Naive thymus-derived CD4-positive, alpha-beta T cell (primary cell): ENCODE measurements at regions of chr14 and their contacts with region 1.

Region 1: GRCh38 chr14:74612350-74613021 is 449 bp upstream of the LTBP2 start:
- DNase-seq: peak; percentile 70 to 97 (median 87)
- ATAC-seq: peak; percentile 95
- H3K4me3 ChIP-seq: peak overlapping the region; percentile 72
- H3K4me3 Mint-ChIP-seq: peak overlapping the region; percentile 60 to 84 (median 78)
- H3K27ac ChIP-seq: peak overlapping the region; percentile 17
- H3K27ac Mint-ChIP-seq: peak overlapping the region in 1 of 9 donors; percentile 46
- H3K4me1 ChIP-seq: peaks cover 5 to 10% of the 10 kb centered on the region in 2 donors
- H3K4me1 Mint-ChIP-seq: peaks cover 23 to 46% (median 39%) of the 10 kb centered on the region in 7 donors
- H3K27me3 ChIP-seq: no peaks in the 10 kb centered on the region
- H3K27me3 Mint-ChIP-seq: peaks cover 0 to 55% (median 6%) of the 10 kb centered on the region in 5 donors

Region 2: DNA sequence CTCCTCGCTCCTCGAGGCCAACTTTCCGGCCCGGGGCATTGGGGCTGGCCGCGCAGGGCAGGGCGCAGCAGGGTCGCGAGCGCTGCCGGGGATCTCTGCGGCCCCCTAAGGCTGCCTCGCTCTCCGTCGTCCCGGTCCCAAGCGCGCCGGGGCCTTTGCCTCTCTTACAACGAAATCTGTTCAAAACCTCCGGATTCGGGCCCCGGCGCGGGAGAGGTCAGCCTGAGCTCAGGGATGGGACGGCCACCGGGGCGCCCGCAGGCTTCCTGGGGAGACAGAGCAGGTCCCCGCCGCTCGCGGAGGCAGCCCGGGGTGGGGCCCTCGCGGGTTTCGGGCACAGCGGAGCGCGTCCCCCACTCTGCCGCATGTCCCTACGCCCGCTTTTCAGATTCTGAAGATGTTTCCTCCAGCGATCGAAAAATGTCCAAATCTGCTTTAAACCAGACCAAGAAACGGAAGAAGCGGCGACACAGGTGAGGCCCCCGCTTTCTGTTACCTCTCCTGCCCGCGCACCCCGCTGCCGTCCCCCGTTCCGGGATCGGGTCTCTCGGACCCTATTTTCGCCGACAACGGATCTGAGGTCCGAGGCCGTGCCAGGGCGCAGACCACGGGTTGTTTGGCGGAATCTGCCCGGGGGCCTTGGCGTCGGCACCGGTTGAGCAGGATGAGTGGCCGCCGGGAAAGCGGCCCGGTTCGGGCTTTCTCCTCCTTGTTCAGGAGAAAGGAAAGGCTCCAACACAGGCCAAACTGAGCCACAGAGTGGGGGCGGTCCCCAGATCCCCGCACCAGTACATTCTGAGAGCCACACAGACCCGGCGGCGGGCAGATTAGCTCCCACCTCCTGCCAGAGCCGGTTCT is 371.5 kb before region 1 on chr14:
- CTCF ChIA-PET with region 1: no interaction called
- POLR2A ChIA-PET with region 1: no interaction called
- intact Hi-C with region 1: no loop called
- DNase-seq: peak in 2 of 9 donors; percentile 5
- ATAC-seq: peak; percentile 32
- H3K4me3 ChIP-seq: peak overlapping the region; percentile 24
- H3K4me3 Mint-ChIP-seq: peak overlapping the region; percentile 33 to 81 (median 72)
- H3K27ac ChIP-seq: no peak overlapping the region
- H3K27ac Mint-ChIP-seq: no peak overlapping the region
- H3K4me1 ChIP-seq: peaks cover 3 to 18% of the 10 kb centered on the region in 2 donors
- H3K4me1 Mint-ChIP-seq: peaks cover 12 to 27% (median 21%) of the 10 kb centered on the region in 7 donors
- H3K27me3 ChIP-seq: peaks cover 11 to 28% of the 10 kb centered on the region in 2 donors
- H3K27me3 Mint-ChIP-seq: peaks cover 74 to 88% (median 85%) of the 10 kb centered on the region in 5 donors

Region 3: GRCh38 chr14:74663884-74664283 is 51.4 kb after region 1 on chr14:
- CTCF ChIA-PET with region 1: interaction called, 4 read pairs
- POLR2A ChIA-PET with region 1: no interaction called
- intact Hi-C with region 1: loop called in 1 of 2 experiments (anchors 5 kb)
- DNase-seq: no peak
- ATAC-seq: no peak
- H3K4me3 ChIP-seq: no peak overlapping the region
- H3K4me3 Mint-ChIP-seq: no peak overlapping the region
- H3K27ac ChIP-seq: no peak overlapping the region
- H3K27ac Mint-ChIP-seq: peak overlapping the region in 2 of 9 donors; percentile 2 to 28
- H3K4me1 ChIP-seq: no peaks in the 10 kb centered on the region
- H3K4me1 Mint-ChIP-seq: peaks cover 0 to 5% (median 0%) of the 10 kb centered on the region in 7 donors
- H3K27me3 ChIP-seq: no peaks in the 10 kb centered on the region
- H3K27me3 Mint-ChIP-seq: no peaks in the 10 kb centered on the region

Region 4: DNA sequence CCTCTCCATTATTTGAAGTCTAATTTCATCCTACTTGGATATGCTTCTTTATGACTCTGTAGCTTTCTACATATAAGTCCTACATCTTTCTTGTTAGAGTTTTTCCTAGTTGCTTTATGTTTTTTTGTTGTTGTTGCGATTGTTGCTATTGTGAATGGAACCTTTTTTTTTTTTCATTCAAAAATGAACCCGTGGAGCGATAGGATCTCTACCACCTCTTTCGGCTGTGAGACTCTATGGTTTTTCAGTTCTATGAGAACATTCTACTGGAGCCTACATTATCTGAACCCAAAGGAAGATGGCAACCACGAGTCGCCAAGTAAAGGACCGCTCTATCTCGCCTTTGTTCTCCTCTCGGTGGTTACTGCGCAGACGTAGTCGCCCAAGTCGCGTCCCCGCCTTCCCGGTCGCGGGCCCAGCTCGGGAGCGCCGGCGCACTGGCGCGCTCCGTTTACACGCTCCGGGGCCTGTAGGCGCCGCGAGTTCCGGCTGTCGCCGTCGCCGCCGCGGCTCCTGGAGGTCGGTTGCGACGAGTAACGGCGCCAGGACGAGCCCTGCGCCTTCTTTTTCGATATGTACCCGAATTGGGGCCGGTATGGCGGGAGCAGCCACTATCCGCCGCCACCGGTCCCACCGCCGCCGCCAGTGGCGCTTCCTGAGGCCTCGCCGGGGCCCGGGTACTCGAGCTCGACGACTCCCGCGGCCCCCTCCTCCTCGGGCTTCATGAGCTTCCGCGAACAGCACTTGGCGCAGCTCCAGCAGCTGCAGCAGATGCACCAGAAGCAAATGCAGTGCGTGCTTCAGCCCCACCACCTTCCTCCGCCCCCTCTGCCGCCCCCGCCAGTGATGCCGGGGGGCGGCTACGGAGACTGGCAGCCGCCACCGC is 150.7 kb after region 1 on chr14 and contains the start of gene YLPM1:
- CTCF ChIA-PET with region 1: interaction called, 14 read pairs
- POLR2A ChIA-PET with region 1: interaction called, 12 read pairs
- intact Hi-C with region 1: loop called (anchors 1 kb)
- DNase-seq: peak; percentile 79 to 97 (median 95)
- ATAC-seq: peak; percentile 98
- H3K4me3 ChIP-seq: peak within 1 kb of the TSS; percentile 58
- H3K4me3 Mint-ChIP-seq: peak within 1 kb of the TSS; percentile 86 to 99 (median 95)
- H3K27ac ChIP-seq: peak within 1 kb of the TSS; percentile 93
- H3K27ac Mint-ChIP-seq: peak within 1 kb of the TSS; percentile 87 to 97 (median 95)
- H3K4me1 ChIP-seq: peaks cover 31 to 38% of the 10 kb centered on the region in 2 donors
- H3K4me1 Mint-ChIP-seq: peaks cover 43 to 56% (median 49%) of the 10 kb centered on the region in 7 donors
- H3K27me3 ChIP-seq: no peaks in the 10 kb centered on the region
- H3K27me3 Mint-ChIP-seq: peaks cover 0 to 2% (median 0%) of the 10 kb centered on the region in 5 donors
- total RNA-seq, gene YLPM1: 84.7 to 119 (median 109) TPM

Region 5: DNA sequence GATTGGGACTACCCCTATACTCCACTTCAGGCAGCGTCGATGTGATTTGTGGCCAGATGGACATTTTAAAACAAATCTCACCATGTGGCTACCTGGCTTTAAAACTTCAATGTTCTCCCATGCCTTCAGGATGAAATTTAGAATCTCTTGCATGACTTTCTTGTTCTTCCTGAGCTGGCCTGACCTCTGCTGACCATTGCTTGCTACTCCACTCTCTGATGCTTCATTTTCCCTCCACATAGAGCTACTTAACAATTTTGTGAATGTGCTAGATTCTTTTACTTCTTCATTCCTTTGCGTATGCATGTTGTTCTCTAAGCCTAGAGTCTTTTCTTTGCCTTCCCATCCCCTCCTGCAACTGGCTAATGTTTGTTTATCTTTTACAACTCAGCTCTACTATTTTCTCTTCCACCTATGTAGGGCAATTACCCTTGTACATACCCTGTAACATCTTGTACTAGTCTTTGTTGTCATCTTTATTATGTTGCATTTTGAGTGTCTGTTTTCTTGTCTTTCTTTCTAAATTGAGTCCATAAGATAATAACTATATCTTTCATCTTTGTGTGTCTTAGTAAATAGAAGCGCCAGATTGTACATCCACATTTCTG is 191.8 kb after region 1 on chr14:
- CTCF ChIA-PET with region 1: interaction called, 12 read pairs
- POLR2A ChIA-PET with region 1: no interaction called
- intact Hi-C with region 1: loop called (anchors 1 kb)
- DNase-seq: peak in 5 of 9 donors; percentile 8 to 41 (median 28)
- ATAC-seq: no peak
- H3K4me3 ChIP-seq: no peak overlapping the region
- H3K4me3 Mint-ChIP-seq: no peak overlapping the region
- H3K27ac ChIP-seq: no peak overlapping the region
- H3K27ac Mint-ChIP-seq: peak overlapping the region in 2 of 9 donors; percentile 6 to 29
- H3K4me1 ChIP-seq: no peaks in the 10 kb centered on the region
- H3K4me1 Mint-ChIP-seq: peaks cover 2 to 25% (median 14%) of the 10 kb centered on the region in 7 donors
- H3K27me3 ChIP-seq: no peaks in the 10 kb centered on the region
- H3K27me3 Mint-ChIP-seq: no peaks in the 10 kb centered on the region

Region 6: GRCh38 chr14:75088574-75089373 is 476.3 kb after region 1 on chr14:
- CTCF ChIA-PET with region 1: interaction called, 6 read pairs
- POLR2A ChIA-PET with region 1: no interaction called
- intact Hi-C with region 1: loop called (anchors 1 to 2 kb)
- DNase-seq: peak in 7 of 9 donors; percentile 27 to 55 (median 47)
- ATAC-seq: peak; percentile 67
- H3K4me3 ChIP-seq: no peak overlapping the region
- H3K4me3 Mint-ChIP-seq: no peak overlapping the region
- H3K27ac ChIP-seq: no peak overlapping the region
- H3K27ac Mint-ChIP-seq: peak overlapping the region in 1 of 9 donors; percentile 40
- H3K4me1 ChIP-seq: no peaks in the 10 kb centered on the region
- H3K4me1 Mint-ChIP-seq: no peaks in the 10 kb centered on the region
- H3K27me3 ChIP-seq: no peaks in the 10 kb centered on the region
- H3K27me3 Mint-ChIP-seq: no peaks in the 10 kb centered on the region

Region 7: DNA sequence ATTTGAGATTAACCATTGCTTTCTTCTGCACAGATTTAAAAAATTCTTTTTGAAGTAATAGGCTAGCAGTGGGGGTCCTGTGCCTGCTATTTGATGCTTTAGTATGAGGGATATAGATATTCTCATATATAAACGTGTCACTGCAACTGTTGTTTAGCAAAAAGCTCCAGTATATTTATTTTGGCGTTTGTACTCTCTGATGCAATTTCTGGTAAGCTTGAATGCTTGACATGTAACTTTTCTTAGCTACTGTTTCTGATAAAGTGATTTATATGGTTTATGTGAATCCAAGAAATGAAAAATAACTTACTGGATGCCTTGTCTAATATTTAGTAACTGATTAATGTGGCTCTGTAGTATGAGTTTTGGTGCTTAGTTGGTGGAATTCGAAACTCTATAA is 1125.7 kb after region 1 on chr14:
- CTCF ChIA-PET with region 1: no interaction called
- POLR2A ChIA-PET with region 1: no interaction called
- intact Hi-C with region 1: no loop called
- DNase-seq: no peak
- ATAC-seq: no peak
- H3K4me3 ChIP-seq: no peak overlapping the region
- H3K4me3 Mint-ChIP-seq: no peak overlapping the region
- H3K27ac ChIP-seq: no peak overlapping the region
- H3K27ac Mint-ChIP-seq: no peak overlapping the region
- H3K4me1 ChIP-seq: no peaks in the 10 kb centered on the region
- H3K4me1 Mint-ChIP-seq: no peaks in the 10 kb centered on the region
- H3K27me3 ChIP-seq: no peaks in the 10 kb centered on the region
- H3K27me3 Mint-ChIP-seq: no peaks in the 10 kb centered on the region